PC-9 (cell line): ENCODE measurements at regions of chr3 and their contacts with region 1.

Region 1: DNA sequence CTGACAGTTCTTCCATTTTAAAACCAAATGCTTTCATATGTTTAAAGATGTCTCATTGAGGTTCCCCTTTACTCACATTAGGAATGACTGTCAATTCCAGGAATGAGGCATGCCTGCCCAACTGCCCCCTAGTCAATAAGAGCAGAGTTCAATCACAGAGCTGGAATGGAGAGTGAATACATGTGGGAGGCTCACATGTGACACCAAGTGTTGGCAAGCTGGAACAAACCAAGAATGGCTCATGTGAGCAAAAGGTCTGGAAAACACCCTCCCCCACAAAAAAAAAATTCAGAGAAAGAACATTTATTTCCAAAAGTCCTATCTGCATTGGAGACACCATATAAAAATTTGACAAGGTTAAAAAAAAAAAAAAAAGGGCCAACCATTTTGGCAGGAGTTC is 3.7 kb downstream of the PBRM1 start:
- DNase-seq: peak; percentile 10 to 48
- H3K4me3 ChIP-seq: no peak overlapping the region
- H3K27ac ChIP-seq: 0 out of 2 replicates have a peak overlapping the region, but pooled peaks have one; percentile 16
- H3K4me1 ChIP-seq: peaks cover 24% of the 10 kb centered on the region
- H3K27me3 ChIP-seq: no peaks in the 10 kb centered on the region
- CTCF ChIP-seq: peak; percentile 27; the same call in 1 of the 2 replicates

Region 2: GRCh38 chr3:52444860-52445793 is 236.9 kb before region 1 on chr3 and contains the start of gene SEMA3G:
- CTCF ChIA-PET with region 1: no interaction called
- POLR2A ChIA-PET with region 1: interaction called, 25 read pairs
- intact Hi-C with region 1: no loop called
- DNase-seq: peak; percentile 48 to 84
- H3K4me3 ChIP-seq: no peak within 1 kb of the TSS
- H3K27ac ChIP-seq: no peak within 1 kb of the TSS
- H3K4me1 ChIP-seq: peaks cover 7% of the 10 kb centered on the region; the same call in 1 of the 2 replicates
- H3K27me3 ChIP-seq: no peaks in the 10 kb centered on the region
- CTCF ChIP-seq: peak; percentile 52
- total RNA-seq, gene SEMA3G: 1.3 and 1.4 TPM in 2 replicates

Region 3: GRCh38 chr3:52663098-52663497 is 18.9 kb before region 1 on chr3:
- CTCF ChIA-PET with region 1: no interaction called
- POLR2A ChIA-PET with region 1: no interaction called
- intact Hi-C with region 1: no loop called
- DNase-seq: no peak
- H3K4me3 ChIP-seq: no peak overlapping the region
- H3K27ac ChIP-seq: no peak overlapping the region
- H3K4me1 ChIP-seq: no peaks in the 10 kb centered on the region
- H3K27me3 ChIP-seq: no peaks in the 10 kb centered on the region
- CTCF ChIP-seq: no peak

Region 4: GRCh38 chr3:52831500-52832301 is 149.7 kb after region 1 on chr3:
- CTCF ChIA-PET with region 1: no interaction called
- POLR2A ChIA-PET with region 1: no interaction called
- intact Hi-C with region 1: no loop called
- DNase-seq: peak; percentile 71 to 81
- H3K4me3 ChIP-seq: no peak overlapping the region
- H3K27ac ChIP-seq: no peak overlapping the region
- H3K4me1 ChIP-seq: peaks cover 11% of the 10 kb centered on the region
- H3K27me3 ChIP-seq: no peaks in the 10 kb centered on the region
- CTCF ChIP-seq: no peak